K562 (cell line): ENCODE measurements at regions of chr19 and their contacts with region 1.

Region 1: GRCh38 chr19:6076675-6077463 is 33.4 kb downstream of the RFX2 start:
- DNase-seq: no peak
- ATAC-seq: no peak
- H3K4me3 ChIP-seq: no peak overlapping the region
- H3K27ac ChIP-seq: no peak overlapping the region
- H3K4me1 ChIP-seq: peaks cover 16 to 17% of the 10 kb centered on the region in 2 experiments
- H3K27me3 ChIP-seq: no peaks in the 10 kb centered on the region
- CTCF ChIP-seq: no peak
- EP300 ChIP-seq: no peak
- POLR2A ChIP-seq: no peak
- RAD21 ChIP-seq: no peak

Region 2: DNA sequence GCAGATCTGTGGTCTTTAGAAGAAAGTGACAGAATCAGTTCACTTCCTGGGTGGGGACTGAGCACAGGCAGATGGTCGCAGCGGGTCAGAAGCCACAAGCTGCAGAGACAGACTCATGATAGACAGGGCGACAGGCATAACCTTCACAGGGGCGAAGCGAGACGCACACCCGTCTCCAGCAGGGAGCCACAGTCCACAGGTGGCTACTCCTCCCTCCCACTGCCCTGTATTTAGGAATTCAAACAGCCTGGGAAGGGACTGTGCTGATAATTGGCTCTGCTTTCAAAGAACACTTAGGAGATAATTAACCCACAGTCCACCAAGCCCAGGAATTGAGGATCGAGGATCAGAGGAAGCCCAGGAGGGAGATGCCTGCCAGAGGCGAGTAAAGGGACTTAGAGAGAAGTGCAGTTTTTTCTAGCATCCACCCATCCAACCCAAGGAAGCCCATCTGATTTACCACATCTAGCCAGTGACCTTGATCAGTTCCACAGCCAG is 10.3 kb after region 1 on chr19:
- CTCF ChIA-PET with region 1: no interaction called
- POLR2A ChIA-PET with region 1: interaction called, 12 read pairs
- in situ Hi-C with region 1: no loop called
- intact Hi-C with region 1: no loop called
- DNase-seq: peak; percentile 41 to 77 (median 62)
- ATAC-seq: peak; percentile 88
- H3K4me3 ChIP-seq: no peak overlapping the region
- H3K27ac ChIP-seq: peak overlapping the region; percentile 61
- H3K4me1 ChIP-seq: peaks cover 14 to 33% of the 10 kb centered on the region in 2 experiments
- H3K27me3 ChIP-seq: no peaks in the 10 kb centered on the region
- CTCF ChIP-seq: no peak
- EP300 ChIP-seq: peak; percentile 14; the same call in 1 of the 2 replicates
- POLR2A ChIP-seq: no peak
- RAD21 ChIP-seq: no peak